Activated B cell treated with CpG ODN at 0.5 μM for 24 hours (primary cell): ENCODE measurements at regions of chr7 and their contacts with region 1.

Region 1: DNA sequence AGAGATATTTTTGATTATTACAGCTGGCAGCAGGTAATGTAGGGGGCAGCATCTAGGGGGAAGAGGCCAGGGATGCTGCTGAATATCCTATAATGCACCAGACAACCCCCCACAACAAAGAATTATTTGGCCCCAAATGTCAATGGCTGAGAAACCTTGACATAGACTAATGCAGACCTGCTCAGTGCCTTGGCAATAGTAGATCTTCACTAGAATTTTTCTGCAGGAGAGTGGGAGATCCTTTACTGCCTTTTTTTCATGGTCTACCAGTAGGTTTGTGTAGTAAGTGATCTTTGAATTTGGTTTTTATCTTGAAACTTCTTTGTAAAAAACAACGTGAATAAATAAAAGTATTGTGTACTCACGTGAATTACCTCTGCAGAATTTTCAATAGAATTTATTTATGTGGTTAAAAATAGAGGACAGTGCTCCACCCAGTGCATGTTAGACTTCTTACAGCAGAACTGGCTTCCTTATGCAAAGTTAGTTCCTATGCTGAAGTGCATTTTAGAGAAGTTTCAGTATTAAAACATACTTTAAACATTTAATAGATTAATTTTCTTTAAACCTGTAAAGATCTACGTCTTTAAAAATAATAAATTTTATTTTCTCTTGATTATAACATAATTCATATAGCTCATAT is 199.6 kb upstream of the HDAC9 start:
- DNase-seq: no peak
- ATAC-seq: peak; percentile 56
- H3K4me3 Mint-ChIP-seq: peak overlapping the region; percentile 48
- H3K27ac Mint-ChIP-seq: peak overlapping the region; percentile 72
- H3K4me1 Mint-ChIP-seq: peaks cover 70% of the 10 kb centered on the region
- H3K27me3 Mint-ChIP-seq: no peaks in the 10 kb centered on the region
- CTCF ChIP-seq: no peak

Region 2: DNA sequence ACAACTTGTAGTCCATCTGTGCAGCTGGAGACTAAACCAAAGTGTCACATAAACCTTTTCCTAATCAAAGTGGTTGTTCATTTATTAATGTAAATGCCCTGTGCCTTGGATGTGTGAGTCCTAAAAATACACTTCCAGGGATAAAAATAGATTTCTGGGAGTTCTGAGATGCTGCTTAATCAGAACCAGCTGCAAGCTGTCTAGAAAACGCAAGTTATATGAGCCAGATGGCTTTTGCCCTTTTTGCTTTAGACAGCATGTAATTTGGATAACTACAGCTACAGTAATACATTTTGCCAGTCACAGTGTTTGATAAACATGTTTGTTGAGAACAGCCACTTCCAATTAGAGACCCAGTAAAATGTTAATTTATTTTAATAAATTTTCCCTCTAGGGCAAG is 83.1 kb before region 1 on chr7:
- CTCF ChIA-PET with region 1: interaction called, 4 read pairs
- POLR2A ChIA-PET with region 1: no interaction called
- intact Hi-C with region 1: loop called (anchors 2 kb)
- DNase-seq: no peak
- ATAC-seq: no peak
- H3K4me3 Mint-ChIP-seq: no peak overlapping the region
- H3K27ac Mint-ChIP-seq: no peak overlapping the region
- H3K4me1 Mint-ChIP-seq: peaks cover 8% of the 10 kb centered on the region
- H3K27me3 Mint-ChIP-seq: no peaks in the 10 kb centered on the region
- CTCF ChIP-seq: no peak

Region 3: GRCh38 chr7:18313965-18314364 is 18.1 kb after region 1 on chr7:
- CTCF ChIA-PET with region 1: no interaction called
- POLR2A ChIA-PET with region 1: no interaction called
- intact Hi-C with region 1: loop called (anchors 2 kb)
- DNase-seq: no peak
- ATAC-seq: no peak
- H3K4me3 Mint-ChIP-seq: no peak overlapping the region
- H3K27ac Mint-ChIP-seq: no peak overlapping the region
- H3K4me1 Mint-ChIP-seq: peaks cover 51% of the 10 kb centered on the region
- H3K27me3 Mint-ChIP-seq: no peaks in the 10 kb centered on the region
- CTCF ChIP-seq: no peak

Region 4: DNA sequence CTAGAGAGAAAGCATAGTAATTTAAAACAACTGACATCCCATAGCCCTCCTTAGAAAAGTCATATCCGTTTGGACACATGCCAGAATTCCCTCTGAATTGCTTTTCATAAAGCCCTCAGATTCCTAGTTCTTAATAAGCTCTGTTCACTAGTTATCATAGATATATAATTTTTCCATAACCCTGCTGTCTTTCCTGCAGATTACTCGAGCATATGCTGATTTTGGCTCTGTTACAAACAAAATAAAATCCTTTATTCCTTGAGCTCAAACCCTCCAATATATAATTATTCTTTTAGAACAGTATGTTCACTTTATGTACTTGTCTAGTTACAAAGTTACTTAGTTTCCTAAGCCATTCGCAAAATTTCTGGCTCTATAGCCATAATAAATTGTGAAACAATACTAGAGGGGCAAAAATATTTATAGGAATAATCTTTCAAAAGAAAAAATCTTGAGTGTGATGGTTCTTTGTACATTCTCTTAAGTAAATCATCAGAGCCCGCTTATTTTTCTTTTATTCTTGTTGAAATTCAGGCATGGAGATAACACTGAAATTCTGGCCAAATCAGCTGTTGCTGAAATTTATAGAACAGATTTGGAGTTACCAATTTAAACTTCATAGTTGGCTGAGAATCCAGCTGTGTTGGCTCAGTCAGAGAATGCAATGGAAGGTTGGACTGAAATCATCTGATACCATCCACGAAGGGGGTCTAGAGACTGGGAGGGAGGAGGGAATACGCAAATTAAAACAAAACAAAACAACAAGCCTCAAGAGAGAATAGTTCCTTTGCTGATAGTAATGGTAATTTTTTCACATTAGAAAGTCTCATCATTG is 1623.6 kb after region 1 on chr7:
- CTCF ChIA-PET with region 1: no interaction called
- POLR2A ChIA-PET with region 1: no interaction called
- intact Hi-C with region 1: no loop called
- DNase-seq: no peak
- ATAC-seq: no peak
- H3K4me3 Mint-ChIP-seq: no peak overlapping the region
- H3K27ac Mint-ChIP-seq: no peak overlapping the region
- H3K4me1 Mint-ChIP-seq: no peaks in the 10 kb centered on the region
- H3K27me3 Mint-ChIP-seq: peaks cover 3% of the 10 kb centered on the region
- CTCF ChIP-seq: no peak